Mammary epithelial cell (primary cell): ENCODE measurements at regions of chr16 and their contacts with region 1.

Region 1: DNA sequence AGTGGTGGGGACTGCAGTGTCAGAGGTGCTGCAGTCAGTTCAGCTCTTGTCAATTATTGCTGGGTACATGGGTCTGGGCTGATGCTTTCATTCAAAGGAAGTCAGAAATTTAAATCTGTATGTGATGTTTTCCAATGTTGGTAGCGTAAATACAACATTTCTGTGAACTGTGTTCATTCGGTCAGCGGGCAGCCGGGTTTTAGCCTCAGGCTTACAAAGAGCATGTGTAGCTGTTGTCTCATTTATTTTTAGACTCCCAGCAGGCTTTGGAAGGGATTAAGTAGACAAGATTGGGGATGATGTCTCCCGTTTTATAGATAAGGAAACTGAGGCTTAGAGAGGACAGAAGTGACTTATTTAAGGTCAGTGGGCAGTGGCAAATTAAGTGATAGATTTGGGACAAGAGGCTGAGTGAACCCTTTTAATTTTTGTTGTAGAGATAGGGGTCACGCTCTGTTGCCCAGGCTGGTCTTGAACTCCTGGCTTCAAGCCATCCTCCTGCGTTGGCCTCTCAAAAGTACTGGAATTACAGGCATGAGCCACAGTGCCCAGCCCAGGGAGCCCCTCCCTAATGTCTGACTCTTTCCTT is 8.1 kb downstream of the AQP8 start:
- DNase-seq: no peak
- H3K4me3 ChIP-seq: no peak overlapping the region
- H3K27ac ChIP-seq: no peak overlapping the region
- H3K4me1 ChIP-seq: no peaks in the 10 kb centered on the region
- H3K27me3 ChIP-seq: no peaks in the 10 kb centered on the region
- CTCF ChIP-seq: no peak

Region 2: GRCh38 chr16:24834459-24835335 is 390.1 kb before region 1 on chr16:
- CTCF ChIA-PET with region 1: interaction called, 6 read pairs
- dilution Hi-C with region 1: no loop called
- in situ Hi-C with region 1: no loop called
- intact Hi-C with region 1: loop called (anchors 1 kb)
- DNase-seq: peak; percentile 33
- H3K4me3 ChIP-seq: no peak overlapping the region
- H3K27ac ChIP-seq: no peak overlapping the region
- H3K4me1 ChIP-seq: no peaks in the 10 kb centered on the region
- H3K27me3 ChIP-seq: no peaks in the 10 kb centered on the region
- CTCF ChIP-seq: peak; percentile 49 to 75

Region 3: DNA sequence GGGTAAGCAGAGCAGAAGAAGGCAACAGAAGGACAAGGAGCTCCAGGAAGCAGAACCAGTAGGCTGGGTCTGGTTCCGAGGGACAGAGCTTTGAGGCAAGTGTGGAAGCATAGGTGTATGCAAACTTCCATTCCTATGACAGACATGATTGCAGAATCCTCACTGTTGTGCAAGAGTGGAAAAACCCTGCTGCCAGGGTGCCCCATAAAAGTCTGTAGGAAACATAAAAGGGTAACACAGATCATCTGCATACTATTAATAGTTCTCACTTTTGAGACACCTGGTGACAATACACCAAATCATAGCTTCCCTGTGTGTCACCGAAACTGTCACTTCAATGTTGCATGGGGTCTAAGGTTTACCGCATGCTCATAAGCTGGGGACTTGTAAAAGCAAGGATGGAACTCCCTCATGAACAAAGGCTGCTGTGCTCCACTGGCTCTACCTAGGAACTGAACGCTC is 249.4 kb before region 1 on chr16:
- CTCF ChIA-PET with region 1: interaction called, 13 read pairs
- dilution Hi-C with region 1: no loop called
- in situ Hi-C with region 1: no loop called
- intact Hi-C with region 1: no loop called
- DNase-seq: peak; percentile 70
- H3K4me3 ChIP-seq: no peak overlapping the region
- H3K27ac ChIP-seq: no peak overlapping the region
- H3K4me1 ChIP-seq: peaks cover 24% of the 10 kb centered on the region
- H3K27me3 ChIP-seq: no peaks in the 10 kb centered on the region
- CTCF ChIP-seq: no peak

Region 4: GRCh38 chr16:25051406-25052150 is 173.2 kb before region 1 on chr16:
- CTCF ChIA-PET with region 1: no interaction called
- dilution Hi-C with region 1: no loop called
- in situ Hi-C with region 1: loop called (anchors 10 kb)
- intact Hi-C with region 1: loop called (anchors 1 kb)
- DNase-seq: peak; percentile 68
- H3K4me3 ChIP-seq: no peak overlapping the region
- H3K27ac ChIP-seq: no peak overlapping the region
- H3K4me1 ChIP-seq: peaks cover 28% of the 10 kb centered on the region
- H3K27me3 ChIP-seq: no peaks in the 10 kb centered on the region
- CTCF ChIP-seq: no peak

Region 5: GRCh38 chr16:25135254-25135878 is 89.5 kb before region 1 on chr16:
- CTCF ChIA-PET with region 1: interaction called, 27 read pairs
- dilution Hi-C with region 1: no loop called
- in situ Hi-C with region 1: no loop called
- intact Hi-C with region 1: no loop called
- DNase-seq: peak; percentile 48
- H3K4me3 ChIP-seq: no peak overlapping the region
- H3K27ac ChIP-seq: no peak overlapping the region
- H3K4me1 ChIP-seq: no peaks in the 10 kb centered on the region
- H3K27me3 ChIP-seq: no peaks in the 10 kb centered on the region
- CTCF ChIP-seq: peak; percentile 16 to 39

Region 6: GRCh38 chr16:25184771-25185170 is 40.1 kb before region 1 on chr16:
- CTCF ChIA-PET with region 1: no interaction called
- dilution Hi-C with region 1: no loop called
- in situ Hi-C with region 1: no loop called
- intact Hi-C with region 1: no loop called
- DNase-seq: peak; percentile 27
- H3K4me3 ChIP-seq: no peak overlapping the region
- H3K27ac ChIP-seq: no peak overlapping the region
- H3K4me1 ChIP-seq: peaks cover 4% of the 10 kb centered on the region
- H3K27me3 ChIP-seq: no peaks in the 10 kb centered on the region
- CTCF ChIP-seq: no peak

Region 7: DNA sequence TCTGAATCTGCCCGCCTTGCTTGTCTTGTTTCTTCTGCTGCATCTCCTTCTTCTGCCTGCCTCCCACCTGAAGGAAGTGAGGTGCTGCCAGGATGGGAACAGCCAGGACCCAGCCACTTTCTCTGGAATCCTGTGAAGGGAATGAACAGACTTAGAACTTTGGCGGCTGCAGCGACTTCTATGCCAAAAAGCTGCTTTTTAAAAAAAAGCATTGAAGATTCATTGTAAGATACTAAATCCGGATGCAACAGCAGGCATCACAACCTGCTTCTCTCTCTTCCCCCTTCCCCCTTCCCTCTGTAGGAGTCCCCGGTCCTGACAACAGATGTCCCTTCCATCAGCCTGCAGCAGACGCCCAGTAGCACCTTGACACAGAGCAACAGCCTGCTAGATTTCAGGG is 643.3 kb after region 1 on chr16:
- CTCF ChIA-PET with region 1: no interaction called
- dilution Hi-C with region 1: no loop called
- in situ Hi-C with region 1: no loop called
- intact Hi-C with region 1: no loop called
- DNase-seq: no peak
- H3K4me3 ChIP-seq: no peak overlapping the region
- H3K27ac ChIP-seq: no peak overlapping the region
- H3K4me1 ChIP-seq: no peaks in the 10 kb centered on the region
- H3K27me3 ChIP-seq: no peaks in the 10 kb centered on the region
- CTCF ChIP-seq: no peak